Right cardiac atrium (tissue), 5 donors: ENCODE measurements at regions of chr12 and their contacts with region 1.

Region 1: DNA sequence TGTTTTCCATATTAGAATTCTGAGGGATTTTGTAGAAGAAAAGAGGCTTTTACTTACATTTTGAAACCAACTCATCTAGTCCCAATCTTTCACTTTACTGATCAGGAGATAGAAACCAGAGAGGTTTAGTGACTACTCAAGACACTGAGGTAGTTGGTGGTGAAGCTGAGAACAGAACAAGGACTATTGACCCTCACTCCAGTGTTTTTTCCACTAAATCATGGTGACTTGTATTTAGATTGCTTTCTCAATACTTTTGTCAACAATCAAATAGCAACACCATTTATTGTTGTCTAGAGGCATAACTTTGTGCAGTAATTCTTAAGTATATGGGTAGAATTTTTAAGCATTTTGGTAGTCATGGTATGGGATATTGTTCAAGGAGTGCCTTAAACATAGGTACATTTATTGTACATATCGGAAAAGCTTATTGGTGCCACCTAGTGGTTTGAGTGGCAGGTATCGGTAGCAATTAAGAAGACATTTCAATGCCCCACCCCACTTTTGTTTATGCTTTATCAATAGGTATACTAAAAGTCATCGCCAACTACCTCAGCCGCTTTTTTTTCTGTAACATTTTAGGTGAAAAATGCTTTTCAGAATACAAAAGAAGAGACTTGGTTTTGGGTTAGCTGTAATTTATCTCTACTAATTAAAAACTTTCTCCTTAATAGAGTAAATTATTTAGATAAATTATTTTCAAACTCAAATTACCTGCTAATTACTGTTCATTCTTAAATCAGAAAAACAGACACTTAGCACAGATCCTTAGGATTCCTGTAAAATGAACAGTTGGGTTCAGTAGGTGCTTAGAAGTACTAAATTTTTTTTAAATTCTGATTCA is 47.3 kb upstream of the PAWR start:
- DNase-seq: no peak
- ATAC-seq: no peak
- H3K4me3 ChIP-seq: no peak overlapping the region
- H3K27ac ChIP-seq: no peak overlapping the region
- H3K4me1 ChIP-seq: no peaks in the 10 kb centered on the region
- H3K27me3 ChIP-seq: no peaks in the 10 kb centered on the region

Region 2: DNA sequence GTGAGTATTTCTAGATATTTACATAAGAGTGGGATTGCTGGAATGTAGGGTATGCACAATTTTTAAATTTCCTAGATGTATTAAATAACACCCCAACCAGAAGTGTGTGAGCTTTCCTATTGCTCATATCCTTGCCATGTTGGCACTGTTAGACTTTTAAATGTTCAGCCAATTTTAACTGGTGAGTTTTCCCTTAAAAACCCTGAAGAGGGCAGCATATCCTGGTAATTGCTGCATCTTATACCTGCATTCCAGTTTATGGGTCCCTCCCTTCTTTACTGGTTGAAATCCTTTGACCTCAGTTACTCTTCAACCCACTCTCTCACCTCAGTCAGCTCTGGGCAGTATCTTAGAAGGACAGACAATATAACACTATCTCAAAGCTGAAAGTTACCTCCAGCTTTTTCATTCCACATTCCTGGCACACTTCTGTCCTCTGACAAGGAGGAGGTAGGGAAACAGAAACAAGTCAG is 317.9 kb before region 1 on chr12:
- intact Hi-C with region 1: loop called in 2 of 4 experiments (anchors 10 kb)
- DNase-seq: no peak
- ATAC-seq: peak; percentile 64 to 73
- H3K4me3 ChIP-seq: no peak overlapping the region
- H3K27ac ChIP-seq: no peak overlapping the region
- H3K4me1 ChIP-seq: no peaks in the 10 kb centered on the region
- H3K27me3 ChIP-seq: no peaks in the 10 kb centered on the region

Region 3: DNA sequence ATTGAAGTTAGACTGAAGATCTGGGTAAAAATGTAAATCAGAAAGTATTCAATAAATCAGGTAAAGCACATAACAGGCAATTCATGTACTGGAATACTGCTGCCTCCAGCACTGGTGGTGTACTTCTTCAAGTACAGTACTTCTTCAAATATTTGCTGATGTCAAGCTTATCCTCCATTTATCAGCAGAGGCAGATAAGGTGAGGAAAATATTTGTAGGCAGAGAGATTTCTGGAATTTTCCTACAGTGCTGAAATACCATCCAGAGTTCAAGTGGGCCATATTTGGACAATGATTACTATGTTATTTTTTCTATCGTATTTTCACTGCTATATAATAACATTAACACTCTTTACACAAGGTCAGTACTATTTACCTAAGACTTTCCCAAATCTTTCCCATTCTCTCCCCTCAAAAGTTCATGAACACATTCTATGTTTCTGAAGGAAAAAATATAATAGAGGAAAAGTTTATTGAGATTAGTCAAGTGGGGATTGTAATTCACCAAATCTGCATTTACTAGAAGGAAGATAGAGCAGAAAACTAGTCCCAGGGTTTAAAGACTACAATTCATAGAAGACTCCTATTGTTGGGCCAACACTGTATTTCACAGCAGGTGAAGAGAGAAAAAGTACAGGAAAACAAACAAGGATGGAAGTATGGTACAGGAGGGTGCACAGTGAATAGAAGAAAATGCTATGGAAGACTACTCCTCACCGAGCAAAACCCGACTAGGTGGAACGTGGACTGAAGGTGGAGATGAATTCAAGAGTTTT is 188.4 kb before region 1 on chr12:
- intact Hi-C with region 1: loop called in 1 of 4 experiments (anchors 5 kb)
- DNase-seq: no peak
- ATAC-seq: no peak
- H3K4me3 ChIP-seq: no peak overlapping the region
- H3K27ac ChIP-seq: no peak overlapping the region
- H3K4me1 ChIP-seq: no peaks in the 10 kb centered on the region
- H3K27me3 ChIP-seq: no peaks in the 10 kb centered on the region

Region 4: DNA sequence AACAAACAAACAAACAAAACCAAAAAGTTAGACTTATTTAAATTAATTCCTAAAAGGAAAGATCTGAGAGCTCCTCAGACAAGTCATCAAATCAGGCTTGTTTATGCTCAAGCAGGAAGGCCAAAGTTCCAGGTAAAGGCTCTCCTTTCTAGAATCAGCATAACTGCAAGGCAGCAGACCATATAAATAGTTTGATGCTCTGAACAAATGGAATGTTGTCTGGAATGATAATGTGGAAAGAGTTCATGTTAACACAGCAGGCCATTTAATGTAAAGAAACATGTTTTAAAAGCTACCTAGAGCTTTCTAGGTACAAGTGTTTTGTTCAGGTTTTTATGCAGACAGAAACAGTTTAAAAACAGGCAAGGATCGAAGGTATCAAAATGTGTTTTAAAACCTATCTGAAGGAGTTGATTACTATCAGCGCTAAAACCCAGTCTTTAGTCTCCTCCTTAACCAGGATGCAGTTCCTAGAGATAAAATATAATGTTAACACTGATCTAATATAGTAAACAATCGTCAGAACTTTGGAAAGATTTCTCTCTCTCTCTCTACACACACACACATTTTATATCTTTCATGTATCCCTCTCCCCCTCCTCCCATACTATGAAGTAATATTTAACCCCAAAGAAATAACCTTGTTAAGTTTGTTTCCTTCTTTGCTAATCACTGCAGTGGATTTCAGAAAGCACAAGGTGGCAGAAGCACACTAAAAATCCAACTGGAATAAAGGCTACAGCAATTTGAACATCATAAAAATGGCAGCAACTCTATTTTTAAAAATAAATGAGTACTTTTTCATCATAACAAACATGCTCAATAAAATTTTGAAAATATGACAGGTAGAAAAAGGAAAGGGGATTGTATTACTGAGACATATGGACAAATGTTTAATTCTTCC is 182.8 kb before region 1 on chr12:
- intact Hi-C with region 1: loop called in 3 of 4 experiments (anchors 5 kb)
- DNase-seq: no peak
- ATAC-seq: peak in 1 of 2 donors; percentile 36
- H3K4me3 ChIP-seq: no peak overlapping the region
- H3K27ac ChIP-seq: no peak overlapping the region
- H3K4me1 ChIP-seq: no peaks in the 10 kb centered on the region
- H3K27me3 ChIP-seq: no peaks in the 10 kb centered on the region